HEK293 (cell line): ENCODE measurements at regions of chr2 and their contacts with region 1.

Region 1: GRCh38 chr2:176126929-176127773 is 2.4 kb upstream of the HOXD8 start:
- H3K4me3 ChIP-seq: no peak overlapping the region
- H3K27ac ChIP-seq: no peak overlapping the region
- H3K4me1 ChIP-seq: peaks cover 5% of the 10 kb centered on the region; the same call in 1 of the 2 replicates
- CTCF ChIP-seq: peak; percentile 63

Region 2: DNA sequence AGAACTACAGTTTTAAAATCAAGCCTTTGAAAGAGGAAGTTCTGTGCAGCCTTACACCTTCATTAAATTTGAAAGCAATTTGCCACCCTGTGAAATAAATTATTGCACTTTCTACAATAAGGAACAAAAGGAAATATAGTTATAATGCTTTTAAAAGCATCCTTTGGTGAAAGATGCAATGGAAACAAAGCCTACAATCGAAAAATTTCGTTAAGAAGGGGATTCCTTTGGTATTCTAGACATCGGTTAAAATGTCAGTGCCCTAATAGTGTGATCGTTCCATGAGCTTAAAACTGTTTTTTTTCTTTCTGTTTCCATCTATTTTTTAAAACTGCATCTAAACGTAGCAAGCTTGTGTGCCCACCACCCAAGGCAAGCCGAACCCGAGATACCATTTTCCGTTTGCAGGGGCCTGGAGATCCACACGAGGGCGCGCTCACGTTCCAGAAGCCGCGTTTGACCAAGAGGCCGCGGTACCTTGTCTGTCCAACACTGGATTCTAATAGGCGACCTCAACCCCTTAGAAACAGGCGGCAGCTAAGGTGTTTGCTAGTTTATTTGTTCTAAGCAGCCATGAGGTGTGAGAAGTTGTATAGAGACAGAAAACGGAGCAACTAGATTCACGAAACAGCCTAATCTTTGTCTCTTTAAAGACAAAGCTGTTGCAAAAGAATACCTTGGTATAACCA is 16.0 kb before region 1 on chr2:
- CTCF ChIA-PET with region 1: interaction called, 19 read pairs
- POLR2A ChIA-PET with region 1: interaction called, 11 read pairs
- H3K4me3 ChIP-seq: no peak overlapping the region
- H3K27ac ChIP-seq: no peak overlapping the region
- H3K4me1 ChIP-seq: 0 out of 2 replicates have a peak, but pooled peaks cover 2% of the 10 kb centered on the region
- CTCF ChIP-seq: peak; percentile 76

Region 3: GRCh38 chr2:176454893-176455811 is 328.0 kb after region 1 on chr2:
- CTCF ChIA-PET with region 1: interaction called, 21 read pairs
- POLR2A ChIA-PET with region 1: interaction called, 3 read pairs
- H3K4me3 ChIP-seq: no peak overlapping the region
- H3K27ac ChIP-seq: no peak overlapping the region
- H3K4me1 ChIP-seq: no peaks in the 10 kb centered on the region; the same call in 1 of the 2 replicates
- CTCF ChIP-seq: peak; percentile 48

Region 4: DNA sequence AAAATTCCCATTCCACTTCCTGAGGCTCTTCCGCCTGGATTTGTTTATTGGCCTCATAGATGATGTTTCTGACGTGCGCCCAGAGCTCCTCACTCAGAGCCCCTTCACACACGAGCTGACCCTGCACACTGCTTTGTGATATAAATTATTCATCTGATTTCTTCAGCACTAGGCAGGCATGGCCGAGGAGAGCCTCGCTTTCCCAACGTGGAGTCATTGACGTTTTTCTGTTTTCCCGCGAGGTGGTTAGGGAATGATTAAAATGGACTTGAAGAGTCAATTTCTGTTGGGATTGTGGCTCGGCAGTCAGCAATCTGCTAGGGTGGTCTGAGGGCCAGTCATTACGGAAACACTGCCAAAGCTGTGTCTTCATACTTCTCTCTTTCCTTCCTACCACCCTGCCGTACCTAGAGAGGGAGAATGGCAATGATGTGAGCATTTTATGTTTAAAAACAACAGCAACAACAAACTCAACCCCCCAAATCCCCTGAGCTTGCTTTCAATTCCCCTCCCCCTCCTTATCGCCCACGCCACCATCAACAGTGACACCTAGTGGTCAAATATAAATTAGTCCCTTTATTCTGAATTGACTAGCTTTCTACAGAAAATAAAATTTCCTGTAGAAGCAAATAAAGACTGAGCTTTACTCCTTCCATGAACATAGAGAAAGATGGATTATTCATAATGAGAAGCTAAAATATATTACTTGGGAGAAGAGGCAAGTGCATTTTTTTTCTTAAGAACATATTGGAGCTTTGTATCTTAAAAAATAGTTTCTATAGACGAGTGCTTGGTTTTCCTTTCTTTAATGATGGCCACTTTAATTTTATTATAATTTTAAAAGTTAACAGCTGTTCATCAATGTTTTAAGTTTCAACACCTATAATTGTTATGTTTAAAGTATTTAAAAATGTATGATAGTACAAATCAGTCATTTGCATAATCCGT is 427.2 kb after region 1 on chr2:
- CTCF ChIA-PET with region 1: interaction called, 16 read pairs
- POLR2A ChIA-PET with region 1: no interaction called
- H3K4me3 ChIP-seq: peak overlapping the region; percentile 17
- H3K27ac ChIP-seq: peak overlapping the region; percentile 92
- H3K4me1 ChIP-seq: peaks cover 7% of the 10 kb centered on the region; the same call in 1 of the 2 replicates
- CTCF ChIP-seq: peak; percentile 90

Region 5: GRCh38 chr2:176638167-176639015 is 511.2 kb after region 1 on chr2:
- CTCF ChIA-PET with region 1: interaction called, 28 read pairs
- POLR2A ChIA-PET with region 1: interaction called, 3 read pairs
- H3K4me3 ChIP-seq: peak overlapping the region; percentile 69
- H3K27ac ChIP-seq: peak overlapping the region; percentile 94
- H3K4me1 ChIP-seq: 0 out of 2 replicates have a peak, but pooled peaks cover 2% of the 10 kb centered on the region
- CTCF ChIP-seq: no peak

Region 6: DNA sequence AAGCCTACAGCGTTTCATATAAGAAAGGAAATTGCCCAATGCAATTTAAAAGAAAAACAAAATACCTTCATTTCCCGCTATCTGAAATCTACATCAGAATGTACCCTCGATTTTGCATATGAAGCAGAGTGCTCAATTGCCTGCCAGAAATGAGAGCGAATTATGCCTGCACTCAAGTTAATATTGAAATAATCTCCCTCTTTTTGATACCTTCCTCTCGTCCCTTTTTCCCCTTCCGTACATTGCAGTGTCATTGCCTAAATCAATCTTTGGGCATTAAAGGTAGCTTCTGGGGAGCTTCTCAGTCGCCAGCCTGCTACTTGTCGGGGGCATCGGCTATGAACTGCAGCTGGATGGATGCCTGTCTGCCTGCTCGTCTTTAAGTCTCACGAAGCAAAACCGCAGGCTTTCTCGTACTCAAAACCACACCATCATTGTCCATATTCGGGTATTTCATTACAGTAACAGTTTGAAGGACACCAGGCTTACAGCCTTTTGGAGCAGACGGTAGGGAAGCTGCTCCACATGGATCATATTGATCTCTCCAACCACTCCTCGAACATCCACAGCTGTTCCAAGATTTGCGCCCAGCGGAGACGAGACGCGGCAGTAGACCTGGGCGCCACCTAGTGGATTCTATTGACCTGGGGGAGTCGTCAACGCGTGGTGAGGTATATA is 1021.5 kb after region 1 on chr2:
- CTCF ChIA-PET with region 1: interaction called, 15 read pairs
- POLR2A ChIA-PET with region 1: interaction called, 3 read pairs
- H3K4me3 ChIP-seq: peak overlapping the region; percentile 42
- H3K27ac ChIP-seq: no peak overlapping the region
- H3K4me1 ChIP-seq: no peaks in the 10 kb centered on the region
- CTCF ChIP-seq: peak; percentile 88